CD14-positive monocyte (primary cell): ENCODE measurements at regions of chr11 and their contacts with region 1.

Region 1: GRCh38 chr11:122690801-122691548 is 35.5 kb downstream of the UBASH3B start:
- DNase-seq: peak in 2 of 3 donors; percentile 37 to 58
- H3K4me3 ChIP-seq: peak overlapping the region; percentile 15 to 71 (median 59)
- H3K4me3 Mint-ChIP-seq: peak overlapping the region; percentile 74 to 84
- H3K27ac ChIP-seq: peak overlapping the region; percentile 90 to 91
- H3K27ac Mint-ChIP-seq: peak overlapping the region; percentile 81 to 95 (median 91)
- H3K4me1 ChIP-seq: peaks cover 58 to 67% of the 10 kb centered on the region in 2 donors
- H3K4me1 Mint-ChIP-seq: peaks cover 80% of the 10 kb centered on the region
- H3K27me3 ChIP-seq: no peaks in the 10 kb centered on the region
- H3K27me3 Mint-ChIP-seq: peaks cover 0 to 3% (median 0%) of the 10 kb centered on the region in 3 donors
- CTCF ChIP-seq: no peak

Region 2: GRCh38 chr11:122655527-122656072 is 35.4 kb before region 1 on chr11 and contains the start of gene UBASH3B:
- intact Hi-C with region 1: loop called in 1 of 2 experiments (anchors 5 kb)
- DNase-seq: peak; percentile 52 to 60 (median 59)
- H3K4me3 ChIP-seq: peak within 1 kb of the TSS; percentile 86 to 90 (median 88)
- H3K4me3 Mint-ChIP-seq: peak within 1 kb of the TSS; percentile 99
- H3K27ac ChIP-seq: peak within 1 kb of the TSS; percentile 83 to 88
- H3K27ac Mint-ChIP-seq: peak within 1 kb of the TSS; percentile 88 to 96 (median 94)
- H3K4me1 ChIP-seq: peaks cover 56 to 58% of the 10 kb centered on the region in 2 donors
- H3K4me1 Mint-ChIP-seq: peaks cover 55% of the 10 kb centered on the region
- H3K27me3 ChIP-seq: no peaks in the 10 kb centered on the region
- H3K27me3 Mint-ChIP-seq: peaks cover 12 to 19% (median 17%) of the 10 kb centered on the region in 3 donors
- CTCF ChIP-seq: no peak
- polyA plus RNA-seq, gene UBASH3B: 3.3 to 13.5 (median 7.1) TPM